Ascending aorta (tissue), 2 donors: ENCODE measurements at regions of chr11 and their contacts with region 1.

Region 1: DNA sequence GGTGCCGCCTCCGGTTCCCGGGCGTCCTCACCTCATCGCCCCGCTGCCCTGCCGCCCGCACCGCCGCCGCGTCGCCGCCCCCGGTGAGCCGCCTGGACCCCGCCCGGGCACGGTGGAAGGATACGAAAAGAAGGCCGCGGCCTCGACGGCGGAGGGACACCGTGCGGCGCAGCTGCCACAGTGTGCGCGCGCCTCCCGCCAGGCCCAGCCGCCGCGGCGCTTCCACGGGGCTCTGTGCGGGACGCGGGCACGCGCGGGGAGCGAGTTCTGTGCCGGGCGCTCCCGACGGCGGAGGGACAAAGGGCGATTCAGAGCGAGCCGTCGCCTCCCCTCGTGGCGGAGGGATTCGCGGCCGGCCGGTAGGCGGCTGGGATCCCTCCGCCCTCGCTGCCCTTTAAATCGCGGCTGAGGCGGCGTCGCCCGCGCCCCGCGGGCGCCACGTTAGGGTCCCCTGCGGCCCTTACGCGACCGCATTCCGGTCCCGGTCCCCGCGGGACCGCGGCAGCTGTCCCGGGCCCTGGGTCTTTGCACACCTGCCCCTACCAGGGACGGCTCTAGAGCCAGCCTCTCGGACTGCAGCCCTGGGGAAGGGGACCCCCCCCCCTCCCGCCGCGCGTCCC is 569 bp upstream of the KMT5B start:
- DNase-seq: peak in 1 of 2 donors; percentile 92
- H3K4me3 ChIP-seq: peak overlapping the region; percentile 90 to 92
- H3K27ac ChIP-seq: peak overlapping the region; percentile 96 to 100
- H3K4me1 ChIP-seq: peaks cover 3 to 29% of the 10 kb centered on the region in 2 donors
- H3K27me3 ChIP-seq: no peaks in the 10 kb centered on the region
- CTCF ChIP-seq: no peak

Region 2: DNA sequence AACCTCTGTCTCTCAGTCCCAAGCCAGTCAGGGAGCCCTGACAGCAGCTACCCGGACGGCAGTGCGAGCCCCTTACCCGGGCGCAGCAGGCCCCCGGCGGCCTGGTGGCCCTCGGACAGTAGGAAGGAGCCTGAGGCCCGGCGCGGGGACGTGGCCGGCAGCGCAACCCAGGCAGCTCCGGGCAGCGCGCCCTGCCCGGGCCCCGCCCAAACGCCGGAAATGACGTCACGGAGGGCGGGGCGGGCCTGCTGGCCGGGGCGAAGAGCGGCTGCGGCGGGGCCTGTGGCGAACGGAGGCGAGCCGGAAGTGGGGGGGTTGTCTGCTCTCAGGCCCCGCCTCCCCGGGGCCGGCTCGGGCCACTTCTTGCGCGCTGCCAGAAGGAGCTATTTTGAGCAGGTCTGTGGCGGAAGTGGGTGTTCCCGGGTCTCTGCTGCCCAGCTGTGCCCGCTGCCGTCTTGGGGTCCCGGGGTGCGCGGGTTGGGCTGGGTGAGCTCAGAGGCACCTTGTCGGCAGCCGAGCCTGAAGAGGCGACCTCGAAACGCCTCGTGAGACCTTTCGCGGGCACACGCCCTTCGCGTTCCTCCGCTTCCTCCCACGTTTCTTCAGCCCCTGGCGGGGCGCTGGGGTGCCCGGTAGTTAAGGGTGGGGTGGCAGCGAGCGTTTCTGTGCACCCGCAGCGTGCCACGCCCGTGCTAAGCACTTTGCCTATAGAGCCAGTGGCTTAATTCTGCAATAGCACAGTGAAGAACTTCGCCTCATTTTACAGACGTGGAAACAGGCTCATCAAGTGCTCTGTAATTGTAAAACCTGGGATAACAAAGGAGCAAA is 58.3 kb after region 1 on chr11 and contains the start of gene C11orf24:
- intact Hi-C with region 1: loop called (anchors 1 kb)
- DNase-seq: peak; percentile 80 to 96
- H3K4me3 ChIP-seq: peak within 1 kb of the TSS; percentile 78 to 82
- H3K27ac ChIP-seq: peak within 1 kb of the TSS; percentile 91 to 94
- H3K4me1 ChIP-seq: peaks cover 8 to 19% of the 10 kb centered on the region in 2 donors
- H3K27me3 ChIP-seq: no peaks in the 10 kb centered on the region
- CTCF ChIP-seq: no peak
- total RNA-seq, gene C11orf24: 123 TPM

Region 3: GRCh38 chr11:68312117-68312779 is 98.6 kb after region 1 on chr11 and contains the start of gene LRP5:
- intact Hi-C with region 1: loop called (anchors 5 kb)
- DNase-seq: no peak
- H3K4me3 ChIP-seq: peak within 1 kb of the TSS; percentile 86 to 97
- H3K27ac ChIP-seq: peak within 1 kb of the TSS; percentile 82 to 84
- H3K4me1 ChIP-seq: peaks cover 21 to 30% of the 10 kb centered on the region in 2 donors
- H3K27me3 ChIP-seq: no peaks in the 10 kb centered on the region
- CTCF ChIP-seq: no peak
- total RNA-seq, gene LRP5: 130 TPM

Region 4: GRCh38 chr11:68424981-68425865 is 211.6 kb after region 1 on chr11:
- intact Hi-C with region 1: no loop called
- DNase-seq: no peak
- H3K4me3 ChIP-seq: no peak overlapping the region
- H3K27ac ChIP-seq: no peak overlapping the region
- H3K4me1 ChIP-seq: no peaks in the 10 kb centered on the region
- H3K27me3 ChIP-seq: no peaks in the 10 kb centered on the region
- CTCF ChIP-seq: no peak

Region 5: DNA sequence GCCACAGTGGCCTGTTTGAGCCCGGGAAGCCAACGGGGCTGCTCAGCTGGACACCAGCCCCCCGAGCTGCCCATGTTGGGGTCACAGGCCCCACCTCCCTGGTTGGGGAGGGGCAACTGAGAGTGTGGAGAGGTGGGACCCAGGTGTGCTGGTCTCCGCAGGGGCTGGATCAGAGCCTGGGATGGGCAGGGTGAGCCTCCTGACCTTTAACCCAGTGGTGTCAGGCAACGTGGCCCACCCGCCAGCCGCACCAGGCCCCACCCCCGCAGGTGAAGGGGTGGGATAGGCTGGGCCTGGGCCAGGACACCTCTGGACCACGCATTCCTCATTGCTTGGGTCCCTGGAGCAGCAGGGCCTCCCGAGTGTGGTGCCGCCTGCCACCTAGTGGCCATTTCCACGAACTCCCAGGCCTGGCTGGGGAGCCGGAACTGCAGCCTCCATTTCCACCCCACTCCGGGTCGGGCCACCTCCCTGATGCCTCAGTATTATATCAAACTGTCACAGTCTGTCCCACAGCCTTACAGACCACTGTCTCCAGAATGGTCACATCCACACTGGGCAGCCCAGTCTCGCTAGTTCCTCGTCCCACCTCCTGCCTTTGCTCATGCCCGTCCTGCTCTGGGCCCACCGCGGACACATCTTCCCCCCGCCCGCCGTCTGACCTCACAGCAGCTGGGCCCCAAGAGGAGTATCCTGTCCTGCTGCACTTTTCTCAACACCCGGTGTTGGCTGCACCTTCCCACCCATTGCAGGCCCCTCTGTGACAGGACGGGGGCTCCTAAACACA is 233.5 kb after region 1 on chr11:
- intact Hi-C with region 1: loop called (anchors 5 kb)
- DNase-seq: peak in 1 of 2 donors; percentile 86
- H3K4me3 ChIP-seq: no peak overlapping the region
- H3K27ac ChIP-seq: no peak overlapping the region
- H3K4me1 ChIP-seq: no peaks in the 10 kb centered on the region
- H3K27me3 ChIP-seq: no peaks in the 10 kb centered on the region
- CTCF ChIP-seq: peak; percentile 89 to 91 (median 90)